Mammary epithelial cell (primary cell): ENCODE measurements at regions of chr2 and their contacts with region 1.

Region 1: GRCh38 chr2:84925724-84926376 is 20.4 kb downstream of the TMSB10 start:
- DNase-seq: peak; percentile 91
- H3K4me3 ChIP-seq: peak overlapping the region; percentile 13 to 42 (median 34)
- H3K27ac ChIP-seq: peak overlapping the region; percentile 81
- H3K4me1 ChIP-seq: peaks cover 35% of the 10 kb centered on the region
- H3K27me3 ChIP-seq: no peaks in the 10 kb centered on the region
- CTCF ChIP-seq: peak; percentile 89 to 97

Region 2: GRCh38 chr2:84495539-84496146 is 430.2 kb before region 1 on chr2:
- CTCF ChIA-PET with region 1: no interaction called
- dilution Hi-C with region 1: no loop called
- in situ Hi-C with region 1: no loop called
- intact Hi-C with region 1: loop called (anchors 1 kb)
- DNase-seq: peak; percentile 39
- H3K4me3 ChIP-seq: no peak overlapping the region
- H3K27ac ChIP-seq: no peak overlapping the region
- H3K4me1 ChIP-seq: peaks cover 2% of the 10 kb centered on the region
- H3K27me3 ChIP-seq: no peaks in the 10 kb centered on the region
- CTCF ChIP-seq: peak; percentile 49 to 56

Region 3: GRCh38 chr2:84881581-84882414 is 44.1 kb before region 1 on chr2:
- CTCF ChIA-PET with region 1: no interaction called
- dilution Hi-C with region 1: no loop called
- in situ Hi-C with region 1: no loop called
- intact Hi-C with region 1: loop called (anchors 1 kb)
- DNase-seq: peak; percentile 77
- H3K4me3 ChIP-seq: peak overlapping the region; percentile 62 to 66 (median 62)
- H3K27ac ChIP-seq: peak overlapping the region; percentile 10
- H3K4me1 ChIP-seq: peaks cover 13% of the 10 kb centered on the region
- H3K27me3 ChIP-seq: no peaks in the 10 kb centered on the region
- CTCF ChIP-seq: peak; percentile 58 to 78

Region 4: GRCh38 chr2:84958135-84959044 is 32.5 kb after region 1 on chr2:
- CTCF ChIA-PET with region 1: interaction called, 5 read pairs
- dilution Hi-C with region 1: no loop called
- in situ Hi-C with region 1: no loop called
- intact Hi-C with region 1: loop called (anchors 1 kb)
- DNase-seq: peak; percentile 99
- H3K4me3 ChIP-seq: no peak overlapping the region
- H3K27ac ChIP-seq: peak overlapping the region; percentile 97
- H3K4me1 ChIP-seq: peaks cover 40% of the 10 kb centered on the region
- H3K27me3 ChIP-seq: no peaks in the 10 kb centered on the region
- CTCF ChIP-seq: no peak

Region 5: DNA sequence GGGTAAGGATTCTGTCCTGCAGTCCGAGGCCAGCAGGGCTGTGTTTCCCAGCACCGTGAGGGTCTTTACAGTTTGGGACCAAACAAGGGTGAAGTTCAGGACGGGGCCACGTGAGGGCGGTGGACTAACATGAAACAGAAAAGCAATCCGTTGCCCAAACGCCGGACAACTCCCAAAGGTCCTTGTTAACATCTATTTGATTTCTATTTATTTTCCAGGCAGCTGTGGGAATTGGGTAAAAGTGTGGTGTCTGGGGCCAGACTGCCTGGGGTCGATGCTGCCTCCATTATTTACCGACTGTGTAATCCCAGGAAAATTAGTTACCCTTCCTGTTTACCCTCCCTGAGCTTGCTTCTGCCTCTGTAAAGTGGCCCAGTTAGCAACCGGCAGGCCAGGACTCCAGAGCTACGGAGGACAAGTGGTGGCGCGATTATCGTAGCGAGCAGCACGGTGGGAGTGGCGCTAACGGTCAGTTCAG is 141.1 kb after region 1 on chr2:
- CTCF ChIA-PET with region 1: no interaction called
- dilution Hi-C with region 1: no loop called
- in situ Hi-C with region 1: no loop called
- intact Hi-C with region 1: loop called (anchors 2 kb)
- DNase-seq: peak; percentile 40
- H3K4me3 ChIP-seq: no peak overlapping the region
- H3K27ac ChIP-seq: no peak overlapping the region
- H3K4me1 ChIP-seq: peaks cover 5% of the 10 kb centered on the region
- H3K27me3 ChIP-seq: no peaks in the 10 kb centered on the region
- CTCF ChIP-seq: peak; percentile 74 to 88

Region 6: DNA sequence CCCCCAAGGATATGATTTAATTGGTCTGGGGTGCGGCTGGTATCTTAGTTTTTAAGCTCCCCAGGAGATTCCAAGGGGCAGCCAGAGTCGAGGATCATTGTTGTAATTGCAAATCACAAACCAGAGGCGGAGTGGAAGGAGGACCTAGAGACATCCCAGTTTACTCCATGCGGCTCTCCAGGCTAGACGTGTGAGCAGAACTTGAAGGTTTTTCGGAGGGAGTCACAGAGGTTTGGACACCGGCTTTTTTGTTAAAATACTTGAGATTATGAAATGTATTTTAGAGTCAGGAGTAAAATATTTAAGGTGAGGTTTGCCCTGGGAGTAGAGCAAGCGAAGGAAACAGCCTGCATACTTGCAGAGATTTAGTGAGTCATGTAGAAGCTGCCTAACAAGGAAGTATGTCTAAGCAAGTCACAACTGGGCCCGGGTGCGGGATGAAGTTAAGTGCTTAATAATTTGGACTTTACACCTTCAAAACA is 362.4 kb after region 1 on chr2:
- CTCF ChIA-PET with region 1: interaction called, 6 read pairs
- dilution Hi-C with region 1: no loop called
- in situ Hi-C with region 1: loop called in 1 of 2 experiments (anchors 25 kb)
- intact Hi-C with region 1: loop called (anchors 5 kb)
- DNase-seq: peak; percentile 95
- H3K4me3 ChIP-seq: no peak overlapping the region
- H3K27ac ChIP-seq: peak overlapping the region; percentile 93
- H3K4me1 ChIP-seq: peaks cover 33% of the 10 kb centered on the region
- H3K27me3 ChIP-seq: no peaks in the 10 kb centered on the region
- CTCF ChIP-seq: no peak